Vagina (tissue), 2 donors: ENCODE measurements at regions of chr11 and their contacts with region 1.

Region 1: DNA sequence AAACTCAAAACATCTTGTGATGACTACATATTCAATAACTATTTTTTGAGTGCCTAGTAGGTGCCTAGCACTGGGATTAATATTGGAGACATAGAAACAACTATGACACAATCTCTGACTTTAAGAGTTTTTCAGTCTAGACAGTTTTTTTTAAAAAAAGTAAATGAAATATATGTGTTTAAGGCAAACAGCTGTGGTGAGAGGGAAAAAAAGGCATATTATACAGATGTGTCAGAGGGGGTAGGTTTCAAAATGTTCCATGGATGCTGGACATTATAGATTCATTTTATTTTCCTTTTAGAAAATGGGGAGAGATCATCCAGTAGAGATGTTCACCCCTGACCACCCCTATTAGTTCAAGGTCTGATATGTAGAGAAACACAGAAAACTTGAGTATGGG is 90.8 kb downstream of the LUZP2 start:
- DNase-seq: no peak
- H3K4me3 ChIP-seq: no peak overlapping the region
- H3K27ac ChIP-seq: no peak overlapping the region
- H3K4me1 ChIP-seq: no peaks in the 10 kb centered on the region
- H3K27me3 ChIP-seq: no peaks in the 10 kb centered on the region
- CTCF ChIP-seq: no peak
- POLR2A ChIP-seq: no peak

Region 2: GRCh38 chr11:24575392-24575791 is 12.2 kb before region 1 on chr11:
- intact Hi-C with region 1: loop called (anchors 1 kb)
- DNase-seq: no peak
- H3K4me3 ChIP-seq: no peak overlapping the region
- H3K27ac ChIP-seq: no peak overlapping the region
- H3K4me1 ChIP-seq: no peaks in the 10 kb centered on the region
- H3K27me3 ChIP-seq: no peaks in the 10 kb centered on the region
- CTCF ChIP-seq: no peak
- POLR2A ChIP-seq: no peak